ENCODE measurements at regions of chr6 and their contacts with region 1.

Region 1: DNA sequence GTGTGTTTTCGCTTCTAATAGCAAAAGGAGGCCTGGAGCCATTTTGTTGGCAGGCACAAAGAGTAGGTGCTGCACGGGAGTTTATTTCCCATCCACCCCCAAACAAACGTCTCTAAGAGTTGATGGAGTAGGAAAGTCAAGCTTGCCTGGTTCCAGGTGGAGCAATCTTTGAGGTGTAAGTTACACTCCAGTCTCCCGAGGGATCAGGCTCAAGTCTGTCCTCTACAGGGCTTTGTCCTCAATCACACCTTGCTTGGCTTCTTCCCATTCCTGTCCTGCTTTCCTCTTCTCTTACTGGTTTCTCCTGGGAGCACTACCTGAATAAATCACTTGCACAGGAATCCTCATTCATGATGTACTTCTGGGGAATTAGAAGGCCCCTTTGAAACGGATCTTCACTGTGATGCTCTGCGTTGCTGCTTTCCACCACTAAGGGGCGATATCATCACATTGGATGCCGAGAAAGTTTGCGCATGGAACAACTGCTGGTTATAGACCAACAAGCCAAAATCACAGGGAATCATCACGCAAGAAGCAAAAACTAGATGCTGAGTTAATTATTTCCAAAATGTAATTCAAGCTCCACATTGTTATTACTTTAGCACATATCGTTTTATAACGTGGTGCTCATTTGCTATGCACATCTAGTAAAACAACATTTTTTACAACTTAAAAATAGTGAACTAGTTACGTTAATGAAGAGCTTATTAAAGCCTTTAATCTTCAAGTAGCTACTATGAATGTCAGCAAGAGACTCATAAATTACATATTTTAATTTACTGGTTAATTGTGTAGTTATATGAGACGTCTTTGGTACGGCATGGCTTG is 156.8 kb downstream of the DNAH8 start:
- DNase-seq: peak; percentile 79
- ATAC-seq: peak; percentile 91
- H3K4me3 Mint-ChIP-seq: no peak overlapping the region
- H3K27ac Mint-ChIP-seq: no peak overlapping the region
- H3K4me1 Mint-ChIP-seq: peaks cover 18% of the 10 kb centered on the region
- H3K27me3 Mint-ChIP-seq: no peaks in the 10 kb centered on the region
- CTCF ChIP-seq: peak; percentile 83

Region 2: GRCh38 chr6:38897507-38897906 is 25.6 kb after region 1 on chr6:
- CTCF ChIA-PET with region 1: interaction called, 10 read pairs
- POLR2A ChIA-PET with region 1: no interaction called
- DNase-seq: no peak
- ATAC-seq: peak; percentile 66
- H3K4me3 Mint-ChIP-seq: no peak overlapping the region
- H3K27ac Mint-ChIP-seq: no peak overlapping the region
- H3K4me1 Mint-ChIP-seq: peaks cover 8% of the 10 kb centered on the region
- H3K27me3 Mint-ChIP-seq: no peaks in the 10 kb centered on the region
- CTCF ChIP-seq: no peak

Region 3: DNA sequence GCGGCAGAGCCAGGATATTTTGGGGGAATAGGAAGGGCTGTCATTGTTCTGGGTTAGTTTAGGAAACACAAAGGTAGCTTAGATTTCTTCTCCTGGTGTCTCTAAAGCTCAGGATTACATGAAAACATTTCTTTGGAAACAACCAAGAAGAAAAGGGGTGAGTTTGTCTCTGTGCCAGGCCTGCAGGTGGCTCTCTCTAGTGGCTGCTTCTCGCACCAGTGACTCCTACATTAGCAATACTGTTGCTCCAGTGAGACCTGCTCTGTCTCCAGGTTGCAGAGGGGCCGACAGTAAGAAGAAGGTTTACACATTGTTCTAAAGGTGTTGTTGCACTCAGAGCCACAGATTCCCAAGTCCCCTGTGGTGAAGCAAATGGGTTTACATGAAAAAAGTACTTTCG is 72.0 kb after region 1 on chr6:
- CTCF ChIA-PET with region 1: interaction called, 18 read pairs
- POLR2A ChIA-PET with region 1: no interaction called
- DNase-seq: peak; percentile 22
- ATAC-seq: peak; percentile 88
- H3K4me3 Mint-ChIP-seq: no peak overlapping the region
- H3K27ac Mint-ChIP-seq: no peak overlapping the region
- H3K4me1 Mint-ChIP-seq: 0 out of 2 replicates have a peak, but pooled peaks cover 3% of the 10 kb centered on the region
- H3K27me3 Mint-ChIP-seq: peaks cover 3% of the 10 kb centered on the region; the same call in 1 of the 2 replicates
- CTCF ChIP-seq: no peak

Region 4: GRCh38 chr6:39083231-39083634 is 211.3 kb after region 1 on chr6:
- CTCF ChIA-PET with region 1: no interaction called
- POLR2A ChIA-PET with region 1: no interaction called
- DNase-seq: no peak
- ATAC-seq: no peak
- H3K4me3 Mint-ChIP-seq: no peak overlapping the region
- H3K27ac Mint-ChIP-seq: no peak overlapping the region; the same call in 1 of the 2 replicates
- H3K4me1 Mint-ChIP-seq: peaks cover 19% of the 10 kb centered on the region
- H3K27me3 Mint-ChIP-seq: no peaks in the 10 kb centered on the region; the same call in 1 of the 2 replicates
- CTCF ChIP-seq: no peak

Measured in WTC11 (cell line).